ENCODE measurements at regions of chr18 and their contacts with region 1.

Region 1: DNA sequence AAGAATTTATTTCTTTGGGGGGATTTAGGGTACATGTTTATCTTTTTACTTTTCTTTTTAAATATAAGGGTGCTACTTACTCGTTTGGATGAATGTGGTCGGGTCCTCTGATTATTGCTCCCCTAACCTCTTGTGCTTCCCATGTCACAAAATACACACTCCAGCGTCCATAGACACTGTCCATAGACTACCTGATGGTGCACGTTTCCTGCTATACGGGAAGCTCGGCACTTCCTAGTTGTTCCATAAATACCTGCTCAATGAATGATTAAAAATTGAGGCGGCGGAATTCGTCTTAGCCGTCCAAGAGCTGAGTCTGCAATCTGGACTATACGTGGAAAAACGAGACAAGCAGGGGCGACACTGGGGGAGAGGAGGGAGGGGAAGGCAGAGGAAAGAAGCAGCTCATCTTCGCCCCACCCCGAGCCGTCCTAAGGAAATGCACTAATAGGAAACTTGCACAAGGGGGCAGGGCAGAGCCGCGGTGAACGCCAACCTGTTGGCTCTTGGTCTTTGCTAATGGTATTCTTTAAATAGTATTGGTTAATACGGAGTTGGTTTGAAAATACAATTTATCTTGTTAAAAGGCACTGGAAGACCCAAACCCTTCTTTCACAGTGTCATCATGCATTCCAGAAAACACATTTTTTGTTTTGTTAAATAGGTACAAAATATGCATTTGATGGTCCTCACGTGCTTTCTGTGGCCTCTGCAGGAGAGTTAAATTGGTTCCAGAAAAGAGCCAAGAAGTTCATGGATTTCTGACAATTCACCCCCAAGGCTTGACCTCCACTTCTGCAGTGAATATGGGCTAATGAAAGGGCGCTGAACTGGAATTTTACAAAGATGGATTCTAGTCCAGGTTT is 73.0 kb upstream of the KCTD1 start:
- DNase-seq: peak; percentile 71
- ATAC-seq: peak; percentile 99
- H3K4me3 Mint-ChIP-seq: peak overlapping the region; percentile 36; the same call in 1 of the 2 replicates
- H3K27ac Mint-ChIP-seq: no peak overlapping the region
- H3K4me1 Mint-ChIP-seq: peaks cover 14% of the 10 kb centered on the region
- H3K27me3 Mint-ChIP-seq: peaks cover 5% of the 10 kb centered on the region
- CTCF ChIP-seq: peak; percentile 80

Region 2: DNA sequence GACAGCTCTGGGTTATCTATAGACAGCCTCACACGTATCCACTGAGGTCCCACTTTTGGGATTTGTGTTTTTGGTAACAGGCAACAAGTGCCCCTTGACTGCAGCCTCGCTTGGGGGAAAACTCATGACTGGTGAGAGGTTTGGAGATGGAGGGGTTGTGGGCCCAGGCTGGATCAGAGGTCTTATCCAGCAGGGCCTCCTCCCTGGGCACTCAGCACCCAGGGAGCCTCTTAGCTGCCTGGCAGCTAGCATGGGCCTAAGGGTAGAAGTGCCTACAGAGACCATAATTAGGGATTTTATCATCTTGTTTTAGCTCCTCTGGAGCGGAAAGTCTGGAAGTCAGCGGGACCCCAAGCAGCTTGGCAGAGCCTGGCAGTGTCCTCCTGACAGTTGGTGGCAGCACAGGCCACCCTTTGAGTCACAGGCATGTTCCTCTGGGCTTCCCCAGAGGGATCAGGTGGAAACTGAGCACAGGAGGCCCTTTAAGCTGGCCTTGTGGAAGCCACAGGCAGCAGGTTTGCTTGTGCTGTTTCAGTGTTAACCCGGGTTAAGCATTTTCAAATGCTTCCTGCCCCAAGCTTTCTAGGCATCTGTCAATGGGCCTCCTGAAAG is 216.1 kb before region 1 on chr18:
- CTCF ChIA-PET with region 1: interaction called, 10 read pairs
- POLR2A ChIA-PET with region 1: no interaction called
- DNase-seq: peak; percentile 31
- ATAC-seq: peak; percentile 74
- H3K4me3 Mint-ChIP-seq: no peak overlapping the region
- H3K27ac Mint-ChIP-seq: no peak overlapping the region
- H3K4me1 Mint-ChIP-seq: peaks cover 37% of the 10 kb centered on the region
- H3K27me3 Mint-ChIP-seq: no peaks in the 10 kb centered on the region
- CTCF ChIP-seq: no peak

Region 3: DNA sequence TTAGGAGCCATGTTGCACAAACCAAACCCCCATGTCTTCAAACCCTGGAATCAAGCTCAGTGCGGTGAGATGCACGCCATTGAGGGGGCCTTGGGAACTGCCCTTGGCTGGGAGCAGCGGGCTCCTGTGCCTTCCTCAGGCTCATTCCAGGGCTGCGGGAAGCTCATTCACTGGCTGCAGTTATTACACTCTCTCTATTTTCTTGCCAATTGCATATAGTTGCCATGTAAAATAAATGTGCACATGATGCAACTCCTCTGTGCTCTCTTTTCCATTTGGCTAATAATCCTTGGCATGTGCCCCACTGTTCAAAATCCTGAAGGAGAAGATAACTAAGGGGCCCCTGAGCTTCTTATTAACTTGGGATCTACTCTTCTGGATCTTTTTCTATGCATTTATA is 147.7 kb before region 1 on chr18:
- CTCF ChIA-PET with region 1: no interaction called
- POLR2A ChIA-PET with region 1: no interaction called
- DNase-seq: no peak
- ATAC-seq: no peak
- H3K4me3 Mint-ChIP-seq: no peak overlapping the region
- H3K27ac Mint-ChIP-seq: no peak overlapping the region
- H3K4me1 Mint-ChIP-seq: peaks cover 32% of the 10 kb centered on the region
- H3K27me3 Mint-ChIP-seq: no peaks in the 10 kb centered on the region
- CTCF ChIP-seq: no peak

Region 4: GRCh38 chr18:26568926-26569665 is 52.3 kb before region 1 on chr18:
- CTCF ChIA-PET with region 1: interaction called, 10 read pairs
- POLR2A ChIA-PET with region 1: no interaction called
- DNase-seq: no peak
- ATAC-seq: peak; percentile 33; the same call in 1 of the 2 replicates
- H3K4me3 Mint-ChIP-seq: no peak overlapping the region
- H3K27ac Mint-ChIP-seq: no peak overlapping the region
- H3K4me1 Mint-ChIP-seq: peaks cover 34% of the 10 kb centered on the region
- H3K27me3 Mint-ChIP-seq: peaks cover 18% of the 10 kb centered on the region
- CTCF ChIP-seq: no peak

Region 5: GRCh38 chr18:26685438-26686157 is 64.2 kb after region 1 on chr18:
- CTCF ChIA-PET with region 1: interaction called, 14 read pairs
- POLR2A ChIA-PET with region 1: no interaction called
- DNase-seq: peak; percentile 15
- ATAC-seq: peak; percentile 77
- H3K4me3 Mint-ChIP-seq: no peak overlapping the region
- H3K27ac Mint-ChIP-seq: no peak overlapping the region; the same call in 1 of the 2 replicates
- H3K4me1 Mint-ChIP-seq: peaks cover 36% of the 10 kb centered on the region
- H3K27me3 Mint-ChIP-seq: peaks cover 59% of the 10 kb centered on the region
- CTCF ChIP-seq: no peak

Region 6: DNA sequence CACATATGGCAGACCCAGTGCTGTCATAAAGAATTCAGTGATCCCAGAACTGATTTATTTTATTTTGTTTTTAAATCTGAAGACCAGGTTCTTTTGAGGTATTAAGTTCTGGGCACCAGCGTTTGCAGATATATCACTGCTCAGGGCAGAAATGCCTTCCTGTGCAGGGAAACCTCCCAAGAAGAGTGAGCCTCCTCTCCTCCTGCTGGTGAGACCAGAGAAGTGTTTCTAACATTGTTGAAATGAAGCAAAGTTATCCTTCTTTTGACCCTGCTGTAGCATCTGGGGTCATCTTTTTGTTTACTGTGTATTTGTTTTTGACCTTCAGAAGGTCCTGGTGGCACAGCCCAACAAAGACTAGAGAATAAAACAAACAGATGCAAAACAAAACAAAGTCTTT is 150.1 kb after region 1 on chr18:
- CTCF ChIA-PET with region 1: interaction called, 23 read pairs
- POLR2A ChIA-PET with region 1: no interaction called
- DNase-seq: peak; percentile 35
- ATAC-seq: peak; percentile 78
- H3K4me3 Mint-ChIP-seq: no peak overlapping the region
- H3K27ac Mint-ChIP-seq: no peak overlapping the region
- H3K4me1 Mint-ChIP-seq: peaks cover 5% of the 10 kb centered on the region
- H3K27me3 Mint-ChIP-seq: no peaks in the 10 kb centered on the region
- CTCF ChIP-seq: peak; percentile 47; the same call in 1 of the 2 replicates

Region 7: GRCh38 chr18:26792661-26793060 is 171.3 kb after region 1 on chr18:
- CTCF ChIA-PET with region 1: interaction called, 10 read pairs
- POLR2A ChIA-PET with region 1: no interaction called
- DNase-seq: no peak
- ATAC-seq: no peak
- H3K4me3 Mint-ChIP-seq: no peak overlapping the region
- H3K27ac Mint-ChIP-seq: no peak overlapping the region
- H3K4me1 Mint-ChIP-seq: no peaks in the 10 kb centered on the region
- H3K27me3 Mint-ChIP-seq: no peaks in the 10 kb centered on the region; the same call in 1 of the 2 replicates
- CTCF ChIP-seq: no peak

Measured in WTC11 (cell line).